ENCODE measurements at regions of chr11 and their contacts with region 1.

Region 1: DNA sequence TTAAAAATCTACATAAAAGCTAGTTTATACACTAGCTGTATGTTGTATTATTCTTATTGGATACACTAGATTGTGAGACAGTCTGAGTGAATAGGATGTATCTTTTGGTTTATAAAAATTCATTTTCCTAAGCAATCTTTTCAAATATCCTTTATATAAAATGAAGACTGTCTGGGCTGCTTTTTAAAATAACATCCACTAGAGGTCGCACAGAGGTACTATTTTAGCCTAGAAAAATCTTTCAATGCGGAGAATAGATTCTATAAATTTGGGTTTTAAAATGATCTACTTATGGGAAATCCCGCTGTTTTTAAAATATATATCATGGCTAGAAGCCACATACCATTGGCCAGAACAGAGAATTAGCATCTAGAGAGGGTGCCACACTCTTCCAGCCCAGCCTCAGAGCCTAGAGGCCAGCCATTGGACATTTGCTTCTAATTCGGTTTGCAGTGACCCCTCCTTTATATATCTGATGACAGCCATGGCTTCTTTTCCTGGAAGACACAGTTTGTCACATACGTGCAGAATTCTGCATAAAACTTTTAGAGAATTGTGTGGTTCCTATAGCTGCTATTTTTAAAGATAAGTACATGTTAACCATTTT is 7.3 kb downstream of the C11orf97 start:
- DNase-seq: peak; percentile 16
- H3K4me3 Mint-ChIP-seq: no peak overlapping the region
- H3K27ac Mint-ChIP-seq: no peak overlapping the region
- H3K4me1 Mint-ChIP-seq: no peaks in the 10 kb centered on the region
- H3K27me3 Mint-ChIP-seq: peaks cover 9% of the 10 kb centered on the region

Region 2: GRCh38 chr11:94543695-94544645 is 24.4 kb after region 1 on chr11 and contains the start of gene FUT4:
- CTCF ChIA-PET with region 1: interaction called, 13 read pairs
- intact Hi-C with region 1: loop called (anchors 1 kb)
- DNase-seq: peak; percentile 80
- H3K4me3 Mint-ChIP-seq: peak within 1 kb of the TSS; percentile 100
- H3K27ac Mint-ChIP-seq: peak within 1 kb of the TSS; percentile 98
- H3K4me1 Mint-ChIP-seq: peaks cover 32% of the 10 kb centered on the region
- H3K27me3 Mint-ChIP-seq: no peaks in the 10 kb centered on the region
- total RNA-seq, gene FUT4: 2.8 to 2.9 TPM

Region 3: DNA sequence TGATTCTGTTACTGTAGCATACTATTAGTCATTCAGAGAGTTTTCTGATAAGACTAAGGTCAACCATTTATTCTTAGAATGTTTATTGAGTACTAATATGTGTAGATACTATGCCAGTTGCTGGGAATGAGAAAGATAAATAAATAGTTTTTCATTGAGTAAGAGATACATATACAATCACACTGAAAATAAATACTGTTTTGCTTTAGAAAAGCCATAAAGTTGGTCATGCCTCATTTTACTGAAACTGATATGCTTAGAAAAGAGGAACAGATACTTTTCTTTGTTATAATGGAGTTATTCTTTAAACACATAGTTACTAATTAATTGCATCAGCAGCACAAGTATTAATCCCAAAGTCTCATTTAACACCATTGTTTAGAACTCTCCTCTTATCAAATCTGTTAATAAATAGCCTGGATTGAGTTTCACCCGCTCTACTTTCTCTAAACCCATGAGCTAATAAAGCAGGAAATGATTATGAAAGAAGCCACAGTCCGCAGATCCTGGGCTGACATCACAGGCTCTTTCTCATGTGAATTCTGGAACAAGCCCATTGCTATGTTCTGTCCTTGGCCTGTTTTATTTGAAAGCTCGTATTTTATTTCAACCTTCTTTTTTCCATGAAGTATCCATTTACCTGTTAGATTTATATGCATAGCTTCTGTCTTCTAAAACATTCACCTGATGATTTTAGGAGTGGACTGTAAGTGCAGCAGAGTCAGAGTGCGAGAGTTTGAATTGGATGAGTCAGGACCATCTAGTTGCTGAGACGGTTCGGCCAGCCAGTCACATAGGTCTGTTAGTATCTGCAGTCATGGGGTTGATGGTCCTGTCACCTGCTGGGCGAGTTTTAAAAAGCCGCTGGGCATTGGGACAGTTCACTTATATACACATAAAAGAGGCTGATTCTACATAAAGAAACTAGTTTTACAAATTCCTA is 83.1 kb after region 1 on chr11:
- CTCF ChIA-PET with region 1: interaction called, 7 read pairs
- intact Hi-C with region 1: loop called (anchors 1 kb)
- DNase-seq: peak; percentile 63
- H3K4me3 Mint-ChIP-seq: no peak overlapping the region
- H3K27ac Mint-ChIP-seq: no peak overlapping the region
- H3K4me1 Mint-ChIP-seq: no peaks in the 10 kb centered on the region
- H3K27me3 Mint-ChIP-seq: no peaks in the 10 kb centered on the region

Region 4: GRCh38 chr11:94741022-94741679 is 221.6 kb after region 1 on chr11:
- CTCF ChIA-PET with region 1: no interaction called
- intact Hi-C with region 1: loop called (anchors 2 kb)
- DNase-seq: peak; percentile 4
- H3K4me3 Mint-ChIP-seq: peak overlapping the region; percentile 68
- H3K27ac Mint-ChIP-seq: no peak overlapping the region
- H3K4me1 Mint-ChIP-seq: peaks cover 12% of the 10 kb centered on the region
- H3K27me3 Mint-ChIP-seq: peaks cover 32% of the 10 kb centered on the region

Region 5: DNA sequence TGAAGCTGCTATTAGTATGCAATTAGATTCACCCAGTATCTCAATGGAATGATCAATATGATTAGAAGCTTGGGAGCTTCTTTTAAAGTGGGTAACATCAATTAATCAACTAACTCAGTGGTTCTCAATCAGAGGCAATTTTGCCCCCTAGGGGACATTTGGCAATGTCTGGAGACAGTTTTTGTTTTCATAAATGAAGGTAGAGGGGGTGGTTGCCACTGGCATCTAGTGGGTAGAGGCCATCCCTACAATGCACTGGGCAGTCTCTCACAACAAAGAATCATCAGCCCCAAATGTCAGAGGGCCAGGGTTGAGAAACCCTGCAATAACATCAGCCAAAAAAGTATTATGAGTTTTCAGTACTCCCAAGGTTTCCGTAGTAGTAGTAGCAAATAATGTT is 242.6 kb after region 1 on chr11:
- CTCF ChIA-PET with region 1: interaction called, 3 read pairs
- intact Hi-C with region 1: loop called (anchors 5 kb)
- DNase-seq: peak; percentile 38
- H3K4me3 Mint-ChIP-seq: no peak overlapping the region
- H3K27ac Mint-ChIP-seq: no peak overlapping the region
- H3K4me1 Mint-ChIP-seq: no peaks in the 10 kb centered on the region
- H3K27me3 Mint-ChIP-seq: peaks cover 10% of the 10 kb centered on the region

Region 6: GRCh38 chr11:94876645-94877442 is 357.3 kb after region 1 on chr11:
- CTCF ChIA-PET with region 1: interaction called, 3 read pairs
- intact Hi-C with region 1: loop called (anchors 5 kb)
- DNase-seq: peak; percentile 86
- H3K4me3 Mint-ChIP-seq: no peak overlapping the region
- H3K27ac Mint-ChIP-seq: peak overlapping the region; percentile 59
- H3K4me1 Mint-ChIP-seq: peaks cover 23% of the 10 kb centered on the region
- H3K27me3 Mint-ChIP-seq: no peaks in the 10 kb centered on the region

Region 7: GRCh38 chr11:94897330-94897768 is 377.8 kb after region 1 on chr11:
- CTCF ChIA-PET with region 1: interaction called, 4 read pairs
- intact Hi-C with region 1: loop called (anchors 1 kb)
- DNase-seq: peak; percentile 62
- H3K4me3 Mint-ChIP-seq: no peak overlapping the region
- H3K27ac Mint-ChIP-seq: no peak overlapping the region
- H3K4me1 Mint-ChIP-seq: no peaks in the 10 kb centered on the region
- H3K27me3 Mint-ChIP-seq: no peaks in the 10 kb centered on the region